H1 (cell line): ENCODE measurements at regions of chr13 and their contacts with region 1.

Region 1: GRCh38 chr13:52968074-52968700 is 60.4 kb upstream of the OLFM4 start:
- DNase-seq: peak; percentile 86 to 90
- H3K4me3 ChIP-seq: no peak overlapping the region
- H3K27ac ChIP-seq: no peak overlapping the region
- H3K4me1 ChIP-seq: peaks cover 0 to 4% (median 3%) of the 10 kb centered on the region in 4 experiments; a peak in 4 of 7 replicates
- H3K27me3 ChIP-seq: no peaks in the 10 kb centered on the region; a peak in 2 of 7 replicates
- CTCF ChIP-seq: peak; percentile 85 to 99 (median 99)
- EP300 ChIP-seq: no peak
- POLR2A ChIP-seq: no peak
- RAD21 ChIP-seq: peak; percentile 97 to 99

Region 2: DNA sequence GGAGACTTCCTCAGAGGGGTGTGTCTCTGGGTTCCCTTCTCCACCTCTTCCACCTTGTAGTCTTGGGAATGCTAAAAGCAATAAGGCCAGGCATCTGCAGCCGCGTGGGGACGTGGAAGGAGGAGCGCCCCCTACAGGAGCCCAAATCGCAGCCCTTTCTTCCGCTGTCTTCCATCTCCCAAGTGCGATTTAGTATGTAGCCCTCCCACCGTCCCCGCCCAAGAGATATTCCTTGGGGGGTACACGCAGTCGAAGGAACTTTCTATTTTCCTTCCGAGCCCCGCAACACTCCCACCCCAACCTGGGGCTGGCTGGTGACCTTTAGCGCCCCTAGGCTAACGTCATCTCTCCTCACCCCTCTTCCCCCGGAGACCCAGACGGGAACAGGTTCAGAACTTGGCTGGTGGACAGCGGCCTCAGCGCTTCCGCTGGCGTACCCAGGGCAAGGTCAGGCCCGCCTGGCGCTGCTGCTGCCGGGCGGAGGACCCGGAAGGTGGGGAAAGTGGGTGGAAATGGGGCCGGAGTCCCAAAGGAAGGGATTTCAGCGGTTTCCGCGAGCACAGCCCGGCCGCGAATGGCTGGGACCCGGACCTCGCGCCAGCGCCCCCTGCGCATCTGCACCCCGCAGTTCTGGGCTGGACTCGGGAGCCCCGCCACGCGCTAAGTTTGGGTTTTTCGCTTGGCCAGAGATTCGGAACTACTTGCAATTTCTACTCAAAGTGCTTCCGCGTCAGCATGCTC is 117.6 kb before region 1 on chr13:
- CTCF ChIA-PET with region 1: interaction called, 154 read pairs
- POLR2A ChIA-PET with region 1: interaction called, 5 read pairs
- DNase-seq: peak; percentile 72 to 94
- H3K4me3 ChIP-seq: peak overlapping the region; percentile 69 to 84 (median 74)
- H3K27ac ChIP-seq: peak overlapping the region; percentile 77; the same call in 1 of the 2 replicates
- H3K4me1 ChIP-seq: peaks cover 4 to 35% (median 25%) of the 10 kb centered on the region in 4 experiments
- H3K27me3 ChIP-seq: peaks cover 39 to 49% (median 45%) of the 10 kb centered on the region in 4 experiments
- CTCF ChIP-seq: peak in 2 of 3 experiments; percentile 70 to 86; a peak in 3 of 4 replicates
- EP300 ChIP-seq: no peak
- POLR2A ChIP-seq: no peak; a peak in 1 of 3 replicates
- RAD21 ChIP-seq: peak; percentile 25 to 42; a peak in 3 of 4 replicates

Region 3: DNA sequence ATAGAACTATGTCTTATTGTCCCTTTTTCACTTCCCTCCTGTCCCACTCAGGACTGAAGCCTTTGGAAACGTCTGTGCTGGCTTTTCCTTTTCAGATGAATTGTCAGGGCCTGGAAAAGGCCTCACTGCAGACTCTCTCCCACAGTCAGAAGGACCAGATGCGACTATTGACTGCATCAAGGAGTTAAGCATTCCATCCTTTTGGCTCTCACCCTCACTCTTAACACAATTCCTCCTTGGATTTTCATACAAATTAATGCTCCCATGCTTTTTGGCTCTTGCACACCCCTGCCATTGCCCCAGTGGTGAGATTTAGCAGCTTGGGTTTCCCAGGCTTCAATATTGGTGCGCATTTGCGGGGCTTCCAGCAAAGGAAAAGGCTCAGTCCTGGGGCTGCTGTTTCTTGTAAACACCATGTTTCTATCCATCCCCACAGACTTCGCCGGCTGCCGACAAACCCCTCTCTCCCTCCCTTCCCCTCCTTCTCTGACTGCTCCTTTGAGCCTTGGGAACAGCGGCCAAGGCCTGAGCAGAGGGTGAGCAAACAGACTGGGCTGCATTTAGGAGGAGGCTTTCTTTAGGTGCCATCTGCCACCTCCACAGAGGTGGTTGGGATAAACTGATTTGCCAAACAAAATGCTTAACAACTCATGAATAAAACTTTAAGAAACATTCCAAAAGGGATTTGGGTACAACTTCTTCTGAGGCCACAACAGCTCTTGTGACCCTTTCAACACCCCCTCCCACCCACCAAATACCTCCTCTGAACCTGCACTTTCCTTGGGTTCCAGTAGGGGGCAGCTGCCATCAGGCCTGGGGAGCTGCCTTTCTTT is 71.1 kb before region 1 on chr13:
- CTCF ChIA-PET with region 1: interaction called, 91 read pairs
- POLR2A ChIA-PET with region 1: no interaction called
- DNase-seq: peak in 1 of 2 experiments; percentile 82
- H3K4me3 ChIP-seq: no peak overlapping the region; a peak in 1 of 8 replicates
- H3K27ac ChIP-seq: no peak overlapping the region
- H3K4me1 ChIP-seq: peaks cover 0 to 25% (median 5%) of the 10 kb centered on the region in 4 experiments; a peak in 4 of 7 replicates
- H3K27me3 ChIP-seq: no peaks in the 10 kb centered on the region; a peak in 1 of 7 replicates
- CTCF ChIP-seq: peak; percentile 70 to 75 (median 73)
- EP300 ChIP-seq: no peak
- POLR2A ChIP-seq: no peak
- RAD21 ChIP-seq: peak; percentile 67 to 68

Region 4: GRCh38 chr13:52931539-52932431 is 36.4 kb before region 1 on chr13:
- CTCF ChIA-PET with region 1: interaction called, 12 read pairs
- POLR2A ChIA-PET with region 1: no interaction called
- DNase-seq: no peak
- H3K4me3 ChIP-seq: no peak overlapping the region
- H3K27ac ChIP-seq: no peak overlapping the region
- H3K4me1 ChIP-seq: no peaks in the 10 kb centered on the region
- H3K27me3 ChIP-seq: no peaks in the 10 kb centered on the region
- CTCF ChIP-seq: no peak
- EP300 ChIP-seq: no peak
- POLR2A ChIP-seq: no peak
- RAD21 ChIP-seq: no peak

Region 5: DNA sequence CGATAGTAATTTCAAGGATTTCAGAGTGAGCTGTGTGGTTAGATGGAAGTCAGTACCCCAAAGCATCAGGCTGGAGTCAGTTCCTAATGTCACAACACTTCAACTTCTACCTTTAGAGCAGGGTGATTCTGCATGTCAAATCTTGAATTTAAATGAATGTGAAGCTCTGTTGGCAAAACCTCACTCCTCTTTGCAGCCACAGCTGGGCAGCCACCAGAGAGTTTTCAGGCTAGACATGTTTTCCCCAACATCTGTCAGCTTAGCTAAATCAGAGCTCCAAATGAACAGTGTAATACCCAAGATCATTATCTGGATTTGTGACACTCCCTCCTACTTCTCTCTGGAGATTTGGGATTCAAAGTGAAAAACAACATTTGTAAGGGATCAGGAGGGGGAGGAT is 26.7 kb after region 1 on chr13:
- CTCF ChIA-PET with region 1: interaction called, 21 read pairs
- POLR2A ChIA-PET with region 1: no interaction called
- DNase-seq: no peak
- H3K4me3 ChIP-seq: no peak overlapping the region
- H3K27ac ChIP-seq: no peak overlapping the region
- H3K4me1 ChIP-seq: peaks cover 0 to 19% (median 7%) of the 10 kb centered on the region in 4 experiments; a peak in 5 of 7 replicates
- H3K27me3 ChIP-seq: no peaks in the 10 kb centered on the region
- CTCF ChIP-seq: no peak
- EP300 ChIP-seq: no peak
- POLR2A ChIP-seq: no peak
- RAD21 ChIP-seq: no peak

Region 6: DNA sequence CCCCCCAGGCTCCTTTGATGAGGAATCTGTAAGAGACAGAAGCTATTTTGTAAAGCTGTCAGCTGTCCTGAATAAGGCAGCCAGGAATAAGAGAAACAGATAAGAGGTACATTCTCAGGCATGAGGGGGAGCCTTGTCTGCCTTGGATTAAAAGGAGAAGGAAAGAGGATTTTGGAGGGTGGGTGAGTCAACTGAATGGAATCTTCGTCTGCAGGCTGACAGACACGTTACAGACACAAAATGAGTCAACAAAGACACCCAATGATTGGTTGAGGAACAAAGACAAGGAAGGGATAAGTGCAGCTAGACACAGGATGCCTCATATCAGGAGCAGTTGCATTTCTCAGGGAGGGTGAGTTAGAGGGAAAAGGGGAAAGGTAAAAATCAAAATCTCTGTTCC is 222.9 kb after region 1 on chr13:
- CTCF ChIA-PET with region 1: interaction called, 14 read pairs
- POLR2A ChIA-PET with region 1: no interaction called
- DNase-seq: peak in 1 of 2 experiments; percentile 51
- H3K4me3 ChIP-seq: no peak overlapping the region
- H3K27ac ChIP-seq: no peak overlapping the region
- H3K4me1 ChIP-seq: peaks cover 0 to 6% (median 5%) of the 10 kb centered on the region in 4 experiments; a peak in 3 of 7 replicates
- H3K27me3 ChIP-seq: no peaks in the 10 kb centered on the region
- CTCF ChIP-seq: no peak
- EP300 ChIP-seq: no peak
- POLR2A ChIP-seq: no peak
- RAD21 ChIP-seq: no peak